Right ventricle myocardium inferior (tissue), 1 donor: ENCODE measurements at regions of chr9 and their contacts with region 1.

Region 1: DNA sequence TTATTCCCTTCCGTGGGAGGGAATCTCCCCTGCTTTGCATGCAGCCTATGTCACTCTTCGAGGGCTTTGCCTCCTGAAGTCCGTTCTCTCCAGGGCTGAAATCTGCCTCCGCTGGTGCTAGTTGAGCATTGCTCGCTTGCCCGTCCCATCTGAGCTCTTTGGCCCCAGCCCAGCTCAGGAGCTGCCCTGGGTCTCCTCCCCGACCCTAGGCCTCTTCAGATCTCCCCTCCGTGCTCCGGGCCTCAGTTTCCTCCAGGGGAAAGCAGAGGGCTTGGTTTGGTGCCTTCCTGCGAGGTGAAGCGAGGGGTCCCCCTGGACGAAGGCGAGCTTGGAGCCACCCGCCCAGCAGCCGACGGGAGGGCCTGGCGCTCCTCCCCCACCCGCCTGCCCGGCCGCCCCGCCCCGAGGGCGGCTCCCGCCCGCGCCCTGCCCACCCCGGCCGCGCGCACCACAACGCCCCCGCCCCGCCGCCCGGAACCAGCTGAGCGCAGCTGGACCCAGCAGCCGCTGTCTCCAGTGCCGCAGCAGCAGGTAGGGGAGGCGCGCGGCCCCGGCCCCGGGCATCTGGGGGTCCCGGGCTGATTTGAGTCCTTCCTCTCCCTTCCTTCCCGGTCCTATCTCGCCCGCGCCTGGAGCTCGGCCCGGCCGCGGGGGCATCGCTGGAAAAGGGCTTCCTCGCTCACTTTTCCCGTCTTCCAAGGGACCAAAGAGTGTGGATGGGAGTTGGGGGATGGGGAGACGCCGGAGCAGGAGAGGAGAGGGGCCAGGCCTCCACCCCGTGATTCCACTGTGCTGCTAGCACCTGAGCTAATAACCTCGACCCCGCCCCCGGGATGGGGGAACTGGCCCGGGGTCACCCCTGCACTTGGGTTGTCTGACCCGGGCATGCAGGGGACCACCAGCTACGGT is at the start of gene GSN:
- DNase-seq: peak; percentile 93
- ATAC-seq: peak; percentile 85
- total RNA-seq, gene GSN: 966 TPM

Region 2: GRCh38 chr9:121222524-121223171 is 45.3 kb before region 1 on chr9:
- intact Hi-C with region 1: loop called (anchors 2 kb)
- DNase-seq: no peak
- ATAC-seq: no peak

Region 3: DNA sequence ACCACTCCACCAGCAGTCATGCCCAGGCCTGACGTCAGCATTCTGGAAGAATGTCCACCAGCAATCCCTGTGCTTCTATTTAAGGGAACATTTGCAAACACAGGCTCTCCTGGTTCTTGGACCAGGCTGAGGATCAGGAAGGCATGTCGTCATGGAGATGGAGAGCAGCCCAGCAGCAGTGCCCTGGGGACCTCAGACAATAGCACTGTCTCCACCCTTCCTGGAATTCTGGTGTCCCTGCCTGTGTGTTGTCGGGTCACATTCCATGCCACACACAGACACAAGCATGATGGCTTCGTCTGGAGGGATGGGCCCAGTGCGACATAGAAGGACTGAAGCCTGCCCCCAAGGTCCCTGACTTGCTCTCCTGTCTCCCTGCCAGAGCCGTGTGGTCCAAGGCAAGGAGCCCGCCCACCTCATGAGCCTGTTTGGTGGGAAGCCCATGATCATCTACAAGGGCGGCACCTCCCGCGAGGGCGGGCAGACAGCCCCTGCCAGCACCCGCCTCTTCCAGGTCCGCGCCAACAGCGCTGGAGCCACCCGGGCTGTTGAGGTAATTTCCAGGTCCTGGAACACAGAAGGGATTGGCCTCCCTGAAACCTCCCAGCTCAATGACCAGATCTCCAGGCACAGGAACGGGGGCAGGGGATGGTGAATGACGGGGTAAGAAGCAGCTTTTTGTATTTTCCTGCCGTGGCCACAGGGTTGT is 58.3 kb after region 1 on chr9:
- intact Hi-C with region 1: no loop called
- DNase-seq: peak; percentile 90
- ATAC-seq: peak; percentile 93